A549 (cell line): ENCODE measurements at regions of chr20 and their contacts with region 1.

Region 1: DNA sequence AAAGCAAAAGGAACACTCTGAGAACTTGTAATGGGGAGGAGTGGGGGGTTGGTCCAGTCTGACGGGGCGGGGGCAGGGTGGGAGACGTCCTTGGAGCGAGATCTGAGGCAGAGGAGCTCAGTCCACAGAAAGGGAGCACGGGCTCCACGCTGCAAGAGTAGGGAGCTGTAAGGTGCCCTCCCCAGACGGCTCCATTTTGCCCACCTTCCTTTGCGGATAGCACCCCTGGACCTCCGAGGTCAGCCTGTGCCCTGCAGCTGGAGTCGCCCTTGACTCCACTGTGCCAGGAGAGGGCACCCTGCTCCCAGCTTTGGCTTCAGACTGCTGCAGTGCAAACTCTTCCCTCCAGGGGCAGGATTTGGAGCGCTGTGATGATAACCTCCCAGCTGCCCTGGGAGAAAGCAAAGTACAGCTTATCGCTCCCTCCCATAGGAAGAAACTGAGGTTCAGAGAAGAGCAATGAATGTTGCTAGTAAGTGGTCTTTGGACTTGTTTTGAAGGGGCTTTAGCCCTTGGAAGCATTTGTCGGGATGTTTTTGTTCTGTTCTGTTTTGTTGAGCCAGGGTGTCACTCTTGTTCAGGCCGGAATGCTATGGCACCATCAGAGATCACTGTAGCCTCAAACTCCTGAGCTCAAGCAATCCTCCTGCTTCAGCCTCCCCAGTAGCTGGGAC is 9.5 kb upstream of the AHCY start:
- DNase-seq: peak; percentile 79 to 90
- ATAC-seq: peak; percentile 92 to 94
- H3K4me3 ChIP-seq: peak overlapping the region; percentile 38
- H3K27ac ChIP-seq: peak overlapping the region; percentile 54 to 80
- H3K4me1 ChIP-seq: peaks cover 41% of the 10 kb centered on the region
- CTCF ChIP-seq: peak; percentile 100
- EP300 ChIP-seq: no peak
- POLR2A ChIP-seq: no peak
- RAD21 ChIP-seq: peak; percentile 100

Region 2: DNA sequence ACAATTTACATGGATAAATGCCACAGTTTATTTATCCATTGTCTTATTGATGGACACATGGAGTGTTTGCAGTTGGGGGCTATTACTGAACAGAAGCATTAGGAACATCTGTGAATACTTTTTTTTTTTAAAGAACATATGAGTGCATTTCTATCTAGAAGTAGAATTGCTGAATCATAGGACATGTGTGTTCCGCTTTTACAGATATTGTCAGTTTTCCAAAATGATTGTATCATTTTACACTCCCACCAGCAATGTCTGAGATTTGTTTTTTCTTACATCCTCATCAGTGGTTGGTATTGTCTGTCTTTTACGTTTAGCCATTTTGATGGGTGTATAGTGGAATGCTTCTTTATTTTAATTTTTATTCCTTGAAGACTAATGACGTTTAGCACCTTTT is 113.5 kb before region 1 on chr20:
- CTCF ChIA-PET with region 1: no interaction called
- POLR2A ChIA-PET with region 1: no interaction called
- DNase-seq: no peak
- ATAC-seq: no peak
- H3K4me3 ChIP-seq: no peak overlapping the region
- H3K27ac ChIP-seq: no peak overlapping the region
- H3K4me1 ChIP-seq: no peaks in the 10 kb centered on the region
- CTCF ChIP-seq: no peak
- EP300 ChIP-seq: no peak
- POLR2A ChIP-seq: no peak
- RAD21 ChIP-seq: no peak

Region 3: GRCh38 chr20:34293589-34293988 is 19.1 kb before region 1 on chr20:
- CTCF ChIA-PET with region 1: interaction called, 38 read pairs
- POLR2A ChIA-PET with region 1: interaction called, 4 read pairs
- DNase-seq: no peak
- ATAC-seq: no peak
- H3K4me3 ChIP-seq: no peak overlapping the region
- H3K27ac ChIP-seq: no peak overlapping the region
- H3K4me1 ChIP-seq: peaks cover 7% of the 10 kb centered on the region; the same call in 1 of the 3 replicates
- CTCF ChIP-seq: no peak
- EP300 ChIP-seq: no peak
- POLR2A ChIP-seq: no peak
- RAD21 ChIP-seq: no peak

Region 4: DNA sequence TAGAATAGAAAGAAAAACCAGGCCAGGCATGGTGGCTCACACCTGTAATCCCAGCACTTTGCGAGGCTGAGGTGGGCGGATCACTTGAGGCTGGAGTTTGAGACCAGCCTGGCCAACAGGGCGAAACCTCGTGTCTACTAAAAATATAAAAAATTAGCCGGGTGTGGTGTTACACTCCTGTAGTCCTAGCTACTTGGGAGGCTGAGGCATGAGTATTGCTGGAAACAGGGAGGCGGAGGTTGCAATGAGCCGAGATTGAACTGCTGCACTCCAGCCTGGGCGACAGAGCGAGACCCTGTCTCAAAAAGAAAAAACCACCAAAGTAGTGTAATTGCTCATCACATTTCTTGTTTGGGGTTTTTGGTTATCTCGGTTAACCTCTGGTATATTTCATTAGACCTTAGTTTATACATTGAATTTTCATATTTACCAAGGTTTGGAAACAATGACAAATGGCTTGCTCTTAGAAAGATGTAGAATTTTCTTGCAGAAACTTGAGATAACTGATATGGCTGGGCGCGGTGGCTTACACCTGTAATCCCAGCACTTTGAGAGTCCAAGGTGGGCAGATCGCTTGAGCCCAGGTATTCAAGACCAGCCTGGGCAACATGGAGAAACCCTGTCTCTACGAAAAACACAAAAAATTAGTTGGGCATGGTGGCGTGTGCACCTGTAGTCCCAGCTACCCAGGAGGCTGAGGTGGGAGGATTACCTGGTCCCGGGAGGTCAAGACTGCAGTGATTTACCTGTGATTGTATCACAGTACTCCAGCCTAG is 64.6 kb after region 1 on chr20:
- CTCF ChIA-PET with region 1: interaction called, 32 read pairs
- POLR2A ChIA-PET with region 1: no interaction called
- DNase-seq: no peak
- ATAC-seq: no peak
- H3K4me3 ChIP-seq: no peak overlapping the region
- H3K27ac ChIP-seq: no peak overlapping the region
- H3K4me1 ChIP-seq: peaks cover 21% of the 10 kb centered on the region
- CTCF ChIP-seq: no peak
- EP300 ChIP-seq: no peak
- POLR2A ChIP-seq: no peak
- RAD21 ChIP-seq: no peak

Region 5: GRCh38 chr20:34426026-34426425 is 113.3 kb after region 1 on chr20:
- CTCF ChIA-PET with region 1: interaction called, 14 read pairs
- POLR2A ChIA-PET with region 1: no interaction called
- DNase-seq: no peak
- ATAC-seq: no peak
- H3K4me3 ChIP-seq: no peak overlapping the region
- H3K27ac ChIP-seq: no peak overlapping the region
- H3K4me1 ChIP-seq: no peaks in the 10 kb centered on the region
- CTCF ChIP-seq: no peak
- EP300 ChIP-seq: no peak
- POLR2A ChIP-seq: no peak
- RAD21 ChIP-seq: no peak

Region 6: GRCh38 chr20:34465286-34465685 is 152.6 kb after region 1 on chr20:
- CTCF ChIA-PET with region 1: interaction called, 34 read pairs
- POLR2A ChIA-PET with region 1: no interaction called
- DNase-seq: no peak
- ATAC-seq: no peak
- H3K4me3 ChIP-seq: no peak overlapping the region
- H3K27ac ChIP-seq: no peak overlapping the region
- H3K4me1 ChIP-seq: no peaks in the 10 kb centered on the region
- CTCF ChIP-seq: no peak
- EP300 ChIP-seq: no peak
- POLR2A ChIP-seq: no peak
- RAD21 ChIP-seq: no peak

Region 7: GRCh38 chr20:34522969-34523871 is 210.5 kb after region 1 on chr20:
- CTCF ChIA-PET with region 1: interaction called, 106 read pairs
- POLR2A ChIA-PET with region 1: interaction called, 3 read pairs
- DNase-seq: peak; percentile 57 to 82
- ATAC-seq: peak; percentile 54 to 73
- H3K4me3 ChIP-seq: no peak overlapping the region
- H3K27ac ChIP-seq: 0 out of 6 replicates have a peak overlapping the region, but pooled peaks of 1 of the 2 experiments have one; percentile 12
- H3K4me1 ChIP-seq: peaks cover 50% of the 10 kb centered on the region
- CTCF ChIP-seq: peak; percentile 60
- EP300 ChIP-seq: no peak
- POLR2A ChIP-seq: no peak
- RAD21 ChIP-seq: peak; percentile 78 to 91

Region 8: GRCh38 chr20:34713194-34713943 is 400.7 kb after region 1 on chr20:
- CTCF ChIA-PET with region 1: interaction called, 13 read pairs
- POLR2A ChIA-PET with region 1: no interaction called
- DNase-seq: peak; percentile 64 to 76
- ATAC-seq: peak; percentile 7 to 21; a peak in 5 of 6 replicates
- H3K4me3 ChIP-seq: no peak overlapping the region
- H3K27ac ChIP-seq: 0 out of 6 replicates have a peak overlapping the region, but pooled peaks of 1 of the 2 experiments have one; percentile 30
- H3K4me1 ChIP-seq: peaks cover 30% of the 10 kb centered on the region
- CTCF ChIP-seq: no peak
- EP300 ChIP-seq: no peak
- POLR2A ChIP-seq: no peak
- RAD21 ChIP-seq: no peak